Activated CD8-positive, alpha-beta T cell treated with anti-CD3 and anti-CD28 coated beads for 36 hours (primary cell): ENCODE measurements at regions of chr17 and their contacts with region 1.

Region 1: GRCh38 chr17:35747540-35748017 is 5.5 kb downstream of the GAS2L2 start:
- DNase-seq: peak; percentile 93
- ATAC-seq: peak; percentile 88
- H3K4me3 Mint-ChIP-seq: peak overlapping the region; percentile 24
- H3K27ac Mint-ChIP-seq: no peak overlapping the region
- H3K4me1 Mint-ChIP-seq: peaks cover 33% of the 10 kb centered on the region
- H3K27me3 Mint-ChIP-seq: peaks cover 43% of the 10 kb centered on the region
- CTCF ChIP-seq: peak; percentile 88

Region 2: DNA sequence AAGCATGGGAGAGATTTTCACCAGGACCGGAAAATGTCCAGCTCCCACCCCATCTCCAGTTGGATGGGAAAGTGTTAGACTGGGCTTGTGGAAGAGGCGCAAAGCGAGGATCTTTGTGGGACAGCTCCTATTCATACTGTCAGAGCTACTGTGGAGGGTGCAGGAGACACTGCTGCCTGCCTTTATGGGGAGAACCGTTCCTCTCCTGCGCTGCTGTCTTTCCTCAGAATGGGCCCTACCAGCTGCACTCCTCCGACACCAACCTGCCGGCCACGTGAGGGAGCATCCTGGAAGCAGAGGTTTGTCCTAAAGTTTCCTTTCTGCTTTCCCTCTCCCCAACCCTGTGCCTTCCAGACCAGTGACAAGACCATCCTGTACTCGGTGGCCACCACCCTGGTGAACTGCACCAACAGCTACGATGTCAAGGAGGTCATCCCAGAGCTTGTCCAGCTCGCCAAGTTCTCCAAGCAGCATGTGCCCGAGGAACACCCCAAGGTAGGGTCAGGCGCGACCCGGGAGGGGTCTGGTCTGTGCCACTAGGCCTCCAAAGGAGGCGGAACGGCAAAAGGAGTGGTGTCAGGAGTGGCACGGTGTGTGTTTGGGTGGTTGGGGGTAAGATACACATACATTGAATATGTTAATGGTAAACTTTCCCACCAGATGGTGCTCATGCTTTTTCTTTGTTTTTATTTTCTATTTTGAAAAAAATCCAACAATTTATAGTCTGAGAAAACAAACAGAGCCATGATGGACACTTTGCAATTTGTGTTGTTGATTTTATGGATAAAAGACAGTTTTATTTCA is 576.4 kb before region 1 on chr17:
- CTCF ChIA-PET with region 1: interaction called, 3 read pairs
- POLR2A ChIA-PET with region 1: no interaction called
- intact Hi-C with region 1: loop called (anchors 10 kb)
- DNase-seq: peak; percentile 31
- ATAC-seq: peak; percentile 83
- H3K4me3 Mint-ChIP-seq: peak overlapping the region; percentile 20
- H3K27ac Mint-ChIP-seq: peak overlapping the region; percentile 79
- H3K4me1 Mint-ChIP-seq: peaks cover 38% of the 10 kb centered on the region
- H3K27me3 Mint-ChIP-seq: no peaks in the 10 kb centered on the region
- CTCF ChIP-seq: peak; percentile 69

Region 3: GRCh38 chr17:35432176-35433074 is 315.2 kb before region 1 on chr17 and contains the start of gene SLFN12:
- CTCF ChIA-PET with region 1: no interaction called
- POLR2A ChIA-PET with region 1: no interaction called
- intact Hi-C with region 1: no loop called
- DNase-seq: peak; percentile 61
- ATAC-seq: peak; percentile 77
- H3K4me3 Mint-ChIP-seq: peak within 1 kb of the TSS; percentile 89
- H3K27ac Mint-ChIP-seq: peak within 1 kb of the TSS; percentile 92
- H3K4me1 Mint-ChIP-seq: peaks cover 41% of the 10 kb centered on the region
- H3K27me3 Mint-ChIP-seq: no peaks in the 10 kb centered on the region
- CTCF ChIP-seq: no peak
- total RNA-seq, gene SLFN12: 5.1 to 6.3 TPM

Region 4: GRCh38 chr17:35510052-35510451 is 237.5 kb before region 1 on chr17:
- CTCF ChIA-PET with region 1: no interaction called
- POLR2A ChIA-PET with region 1: no interaction called
- intact Hi-C with region 1: no loop called
- DNase-seq: no peak
- ATAC-seq: no peak
- H3K4me3 Mint-ChIP-seq: no peak overlapping the region
- H3K27ac Mint-ChIP-seq: no peak overlapping the region
- H3K4me1 Mint-ChIP-seq: peaks cover 53% of the 10 kb centered on the region
- H3K27me3 Mint-ChIP-seq: no peaks in the 10 kb centered on the region
- CTCF ChIP-seq: no peak

Region 5: DNA sequence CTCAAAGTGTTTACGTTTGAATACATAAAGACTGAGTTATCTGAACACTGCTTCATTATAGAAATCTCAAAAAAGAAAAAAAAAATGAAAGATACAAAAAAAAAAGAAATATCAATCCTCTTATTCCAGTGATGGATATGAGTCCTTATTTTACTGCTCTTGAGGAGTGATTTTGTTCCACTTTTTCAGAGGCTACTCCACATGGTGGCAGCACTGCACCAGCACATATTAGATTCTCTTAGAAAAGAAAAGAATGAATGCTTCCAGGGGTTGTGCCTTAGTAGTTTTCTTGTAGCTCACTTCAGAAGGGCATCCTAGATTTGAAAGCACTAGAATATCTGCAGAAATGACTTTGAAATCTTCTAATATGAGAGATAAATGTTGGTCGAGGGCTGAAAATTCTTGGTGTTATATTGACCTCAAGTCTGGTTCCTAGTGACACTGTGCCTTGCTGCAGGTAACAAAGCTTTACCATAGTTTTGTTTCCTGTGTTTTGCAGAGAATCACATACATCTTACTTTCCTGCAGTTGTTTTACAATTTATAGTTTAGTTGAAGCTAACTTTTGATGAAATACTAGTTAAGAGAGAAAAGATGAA is 134.6 kb before region 1 on chr17:
- CTCF ChIA-PET with region 1: interaction called, 121 read pairs
- POLR2A ChIA-PET with region 1: no interaction called
- intact Hi-C with region 1: loop called (anchors 5 kb)
- DNase-seq: peak; percentile 70
- ATAC-seq: no peak
- H3K4me3 Mint-ChIP-seq: no peak overlapping the region
- H3K27ac Mint-ChIP-seq: no peak overlapping the region
- H3K4me1 Mint-ChIP-seq: peaks cover 3% of the 10 kb centered on the region
- H3K27me3 Mint-ChIP-seq: no peaks in the 10 kb centered on the region
- CTCF ChIP-seq: peak; percentile 70

Region 6: GRCh38 chr17:35726127-35726952 is 21.2 kb before region 1 on chr17:
- CTCF ChIA-PET with region 1: interaction called, 24 read pairs
- POLR2A ChIA-PET with region 1: interaction called, 6 read pairs
- intact Hi-C with region 1: no loop called
- DNase-seq: no peak
- ATAC-seq: no peak
- H3K4me3 Mint-ChIP-seq: no peak overlapping the region
- H3K27ac Mint-ChIP-seq: no peak overlapping the region
- H3K4me1 Mint-ChIP-seq: peaks cover 11% of the 10 kb centered on the region
- H3K27me3 Mint-ChIP-seq: no peaks in the 10 kb centered on the region
- CTCF ChIP-seq: no peak

Region 7: GRCh38 chr17:35780951-35781350 is 33.4 kb after region 1 on chr17:
- CTCF ChIA-PET with region 1: interaction called, 14 read pairs
- POLR2A ChIA-PET with region 1: no interaction called
- intact Hi-C with region 1: no loop called
- DNase-seq: no peak
- ATAC-seq: no peak
- H3K4me3 Mint-ChIP-seq: no peak overlapping the region
- H3K27ac Mint-ChIP-seq: no peak overlapping the region
- H3K4me1 Mint-ChIP-seq: no peaks in the 10 kb centered on the region
- H3K27me3 Mint-ChIP-seq: peaks cover 3% of the 10 kb centered on the region
- CTCF ChIP-seq: no peak

Region 8: DNA sequence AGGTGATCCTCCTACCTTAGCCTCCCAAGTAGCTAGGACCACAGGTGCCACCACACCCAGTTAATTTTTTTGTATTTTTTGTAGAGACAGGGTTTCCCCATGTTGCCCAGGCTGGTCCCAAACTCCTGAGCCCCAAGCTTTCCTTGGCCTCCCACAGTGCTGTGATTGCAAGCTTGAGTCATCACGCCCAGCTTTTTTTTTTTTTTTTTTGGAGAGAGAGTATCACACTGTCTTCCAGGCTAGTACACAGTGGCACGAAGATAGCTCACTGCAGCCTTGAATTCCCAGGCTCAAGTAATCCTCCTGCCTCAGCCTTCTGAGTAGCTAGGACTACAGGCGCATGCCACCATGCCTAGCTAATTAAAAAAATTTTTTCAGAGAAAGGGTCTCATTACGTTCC is 93.9 kb after region 1 on chr17:
- CTCF ChIA-PET with region 1: no interaction called
- POLR2A ChIA-PET with region 1: no interaction called
- intact Hi-C with region 1: no loop called
- DNase-seq: no peak
- ATAC-seq: no peak
- H3K4me3 Mint-ChIP-seq: no peak overlapping the region
- H3K27ac Mint-ChIP-seq: no peak overlapping the region
- H3K4me1 Mint-ChIP-seq: peaks cover 13% of the 10 kb centered on the region
- H3K27me3 Mint-ChIP-seq: no peaks in the 10 kb centered on the region
- CTCF ChIP-seq: no peak